Kidney (tissue), 22 donors: ENCODE measurements at regions of chr3 and their contacts with region 1.

Region 1: DNA sequence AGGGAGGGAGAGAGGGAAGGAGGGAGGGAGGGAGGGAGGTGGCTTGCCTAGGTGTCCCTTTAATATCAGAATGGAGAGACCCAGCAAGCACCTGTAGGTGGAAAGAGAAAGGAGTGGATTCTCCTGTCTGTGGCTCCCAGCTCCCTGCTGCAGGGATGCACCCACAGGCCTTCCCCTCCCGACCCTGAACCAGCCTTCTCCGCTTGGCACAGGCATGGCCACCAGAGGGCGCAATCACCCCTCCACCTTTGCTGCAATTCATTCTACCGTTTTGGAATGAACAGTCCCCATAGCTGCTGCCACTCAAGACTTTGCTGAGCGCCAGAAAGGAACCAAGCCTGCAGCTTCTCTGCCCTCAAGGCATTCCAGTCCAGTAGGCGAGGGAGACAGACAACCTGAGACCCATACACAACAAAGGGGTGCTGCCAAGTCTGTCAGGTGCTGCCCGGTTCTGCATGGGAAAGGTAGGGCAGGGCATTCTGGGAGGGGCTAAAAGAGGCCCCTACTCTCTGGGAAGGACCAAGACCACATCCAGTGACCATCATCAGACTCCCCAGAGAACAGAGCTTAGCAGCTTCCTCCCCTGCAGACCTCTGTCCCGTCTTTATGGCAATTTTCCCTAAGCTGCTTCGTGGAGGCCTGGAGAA is 4.9 kb downstream of the TLR9 start:
- DNase-seq: peak; percentile 85 to 91 (median 89)
- H3K4me3 ChIP-seq: no peak overlapping the region
- H3K27ac ChIP-seq: no peak overlapping the region
- H3K4me1 ChIP-seq: peaks cover 0 to 32% (median 4%) of the 10 kb centered on the region in 3 donors
- H3K27me3 ChIP-seq: no peaks in the 10 kb centered on the region
- CTCF ChIP-seq: peak; percentile 95

Region 2: DNA sequence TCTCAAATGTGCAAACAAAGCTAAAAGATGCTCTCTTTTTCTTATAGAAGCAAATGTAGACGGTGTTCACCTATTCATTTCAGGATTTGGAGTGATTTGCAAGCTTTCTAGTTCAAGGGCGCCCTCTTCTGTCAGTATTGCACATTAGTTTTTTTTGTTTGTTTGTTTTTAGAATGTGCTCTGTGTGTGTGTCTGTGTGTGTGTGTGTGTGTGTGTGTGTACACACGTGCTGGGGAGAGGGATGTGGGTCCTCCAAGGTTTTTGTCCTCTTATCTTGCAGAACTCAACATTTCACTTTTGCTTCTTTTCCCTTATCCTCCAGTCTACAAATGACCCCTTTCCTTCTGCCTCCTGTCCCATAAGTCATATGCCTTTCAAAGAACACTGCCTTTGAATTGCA is 119.1 kb after region 1 on chr3:
- intact Hi-C with region 1: loop called (anchors 10 kb)
- DNase-seq: peak in 3 of 5 donors; percentile 68 to 96 (median 86)
- H3K4me3 ChIP-seq: no peak overlapping the region
- H3K27ac ChIP-seq: no peak overlapping the region
- H3K4me1 ChIP-seq: no peaks in the 10 kb centered on the region
- H3K27me3 ChIP-seq: no peaks in the 10 kb centered on the region
- CTCF ChIP-seq: peak; percentile 83